Common myeloid progenitor, CD34-positive (primary cell): ENCODE measurements at regions of chr21 and their contacts with region 1.

Region 1: GRCh38 chr21:44012528-44013379 is 645 bp downstream of the TRAPPC10 start:
- DNase-seq: peak; percentile 59 to 83 (median 70)
- H3K4me3 ChIP-seq: peak overlapping the region; percentile 70 to 88 (median 81)
- H3K27ac ChIP-seq: peak overlapping the region; percentile 76 to 87
- H3K4me1 ChIP-seq: peaks cover 24 to 62% (median 54%) of the 10 kb centered on the region in 4 experiments
- H3K27me3 ChIP-seq: no peaks in the 10 kb centered on the region

Region 2: GRCh38 chr21:44024887-44025362 is 12.2 kb after region 1 on chr21:
- CTCF ChIA-PET with region 1: interaction called, 14 read pairs
- POLR2A ChIA-PET with region 1: interaction called, 5 read pairs
- DNase-seq: peak; percentile 30 to 54 (median 47)
- H3K4me3 ChIP-seq: peak overlapping the region in 3 of 7 experiments; percentile 5 to 55 (median 28)
- H3K27ac ChIP-seq: peak overlapping the region in 1 of 2 experiments; percentile 81
- H3K4me1 ChIP-seq: peaks cover 16 to 76% (median 41%) of the 10 kb centered on the region in 4 experiments
- H3K27me3 ChIP-seq: no peaks in the 10 kb centered on the region